HEK293 (cell line): ENCODE measurements at regions of chr5 and their contacts with region 1.

Region 1: DNA sequence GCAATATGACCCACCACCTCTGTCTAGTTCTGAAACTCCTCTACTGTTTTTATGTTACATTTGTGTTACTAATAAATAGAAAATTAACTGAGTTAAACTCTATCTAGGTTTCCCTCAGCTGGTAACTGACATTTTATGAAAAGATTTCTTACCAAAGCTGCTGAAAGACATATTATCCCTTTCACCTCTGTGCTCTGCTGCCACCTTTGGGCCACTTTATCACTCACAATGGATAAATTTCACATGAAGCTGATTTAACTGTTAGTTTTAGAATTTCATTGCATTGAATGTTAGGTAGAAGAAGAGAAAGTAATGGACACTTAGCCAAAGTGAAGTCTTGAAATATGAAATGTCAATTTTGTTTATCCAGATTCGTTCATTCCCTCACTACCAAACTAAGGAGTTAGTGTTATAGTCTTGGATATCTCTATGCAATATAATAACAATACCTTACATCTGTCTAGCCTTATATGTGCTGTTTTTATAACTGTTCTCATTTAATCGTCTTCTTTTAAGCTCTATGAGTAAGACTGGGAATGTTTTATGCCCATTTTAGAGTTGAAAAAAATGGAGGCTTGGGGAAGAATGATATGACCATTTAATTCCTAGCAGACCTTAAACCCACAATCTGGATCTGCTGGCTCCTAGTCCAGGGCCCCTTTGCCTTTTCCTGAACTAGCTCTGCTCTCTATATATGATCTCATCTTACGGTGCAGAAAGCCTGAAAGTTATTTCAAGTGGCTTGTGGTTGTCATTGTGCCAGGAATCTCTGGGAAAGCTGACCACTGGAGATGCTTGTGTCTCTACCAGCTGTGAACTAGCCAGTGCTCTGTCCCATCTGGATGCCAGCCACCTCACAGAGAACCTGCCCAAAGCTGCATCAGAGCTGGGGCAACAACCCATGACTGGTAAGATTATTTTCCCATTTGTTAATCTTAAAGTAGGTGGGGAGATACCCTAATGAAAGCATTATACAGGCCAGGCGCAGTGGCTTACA is 97.1 kb downstream of the GOLPH3 start:
- H3K4me3 ChIP-seq: no peak overlapping the region
- H3K27ac ChIP-seq: no peak overlapping the region
- H3K4me1 ChIP-seq: no peaks in the 10 kb centered on the region
- CTCF ChIP-seq: peak; percentile 61

Region 2: DNA sequence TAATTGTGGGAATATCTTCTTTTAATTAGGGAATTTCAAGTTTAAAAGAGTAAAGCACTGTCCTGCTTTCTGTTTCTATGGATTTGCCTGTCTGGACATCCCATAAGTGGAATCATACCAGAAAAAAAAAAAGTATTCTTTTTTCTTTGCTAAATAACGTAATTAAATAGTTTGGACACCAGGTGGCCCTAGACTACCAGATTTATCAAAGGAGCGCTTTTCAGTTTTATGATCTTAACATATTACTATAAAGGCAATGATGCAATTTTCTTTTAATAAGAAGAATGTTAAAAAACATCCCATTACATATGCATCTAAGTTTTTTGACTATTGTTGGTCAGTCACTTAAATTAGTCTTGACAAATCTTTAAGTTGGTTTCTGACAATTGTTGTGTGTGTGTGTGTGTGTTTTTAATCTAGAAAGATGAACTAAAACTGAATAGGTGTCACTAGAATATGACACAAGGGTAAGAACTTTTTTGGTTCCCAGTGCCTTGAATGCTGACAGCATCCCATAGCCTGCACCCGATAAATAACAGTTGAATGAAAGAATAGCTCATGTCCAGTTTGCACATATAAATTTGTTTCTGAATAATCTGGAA is 495.4 kb before region 1 on chr5:
- CTCF ChIA-PET with region 1: interaction called, 18 read pairs
- POLR2A ChIA-PET with region 1: no interaction called
- H3K4me3 ChIP-seq: no peak overlapping the region
- H3K27ac ChIP-seq: no peak overlapping the region
- H3K4me1 ChIP-seq: no peaks in the 10 kb centered on the region
- CTCF ChIP-seq: no peak

Region 3: DNA sequence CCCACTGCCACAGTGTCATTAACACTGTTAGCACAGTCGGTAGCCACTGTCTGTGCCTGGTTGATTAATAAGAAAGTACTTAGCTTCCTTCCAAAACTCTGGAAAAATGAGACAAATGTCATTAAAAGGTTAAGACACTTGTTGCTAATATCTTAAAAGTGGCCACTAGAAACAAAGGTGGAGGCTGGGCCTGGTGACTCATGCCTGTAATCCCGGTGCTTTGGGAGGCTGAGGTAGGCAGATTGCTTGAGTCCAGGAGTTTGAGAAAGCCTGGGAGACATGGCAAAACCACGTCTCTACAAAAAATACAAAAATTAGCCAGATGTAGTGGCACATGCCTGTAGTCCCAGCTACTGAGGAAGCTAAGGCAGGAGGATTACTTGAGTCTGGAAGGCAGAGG is 244.0 kb before region 1 on chr5:
- CTCF ChIA-PET with region 1: interaction called, 119 read pairs
- POLR2A ChIA-PET with region 1: no interaction called
- H3K4me3 ChIP-seq: no peak overlapping the region
- H3K27ac ChIP-seq: no peak overlapping the region
- H3K4me1 ChIP-seq: no peaks in the 10 kb centered on the region
- CTCF ChIP-seq: no peak

Region 4: DNA sequence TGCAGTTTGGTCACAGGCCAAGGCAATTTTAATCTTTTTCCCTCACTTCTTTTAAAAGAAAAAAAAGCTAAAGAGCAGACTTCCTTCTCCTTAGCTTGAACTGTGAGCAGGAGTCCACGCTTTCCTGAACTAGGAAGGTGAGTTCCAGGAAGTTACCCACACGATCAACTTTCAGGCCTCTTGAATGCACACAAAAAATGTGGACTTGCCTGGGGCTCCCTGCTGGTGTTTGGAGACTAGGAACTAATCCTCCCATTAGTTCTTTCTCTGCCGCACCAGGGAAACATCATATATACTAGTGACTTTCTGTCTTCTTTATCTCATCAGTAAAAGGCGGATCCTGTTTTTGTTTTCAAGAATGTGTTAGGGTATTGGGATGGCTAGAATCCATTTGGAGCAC is 142.8 kb before region 1 on chr5:
- CTCF ChIA-PET with region 1: interaction called, 11 read pairs
- POLR2A ChIA-PET with region 1: no interaction called
- H3K4me3 ChIP-seq: no peak overlapping the region
- H3K27ac ChIP-seq: no peak overlapping the region
- H3K4me1 ChIP-seq: 0 out of 2 replicates have a peak, but pooled peaks cover 3% of the 10 kb centered on the region
- CTCF ChIP-seq: no peak

Region 5: DNA sequence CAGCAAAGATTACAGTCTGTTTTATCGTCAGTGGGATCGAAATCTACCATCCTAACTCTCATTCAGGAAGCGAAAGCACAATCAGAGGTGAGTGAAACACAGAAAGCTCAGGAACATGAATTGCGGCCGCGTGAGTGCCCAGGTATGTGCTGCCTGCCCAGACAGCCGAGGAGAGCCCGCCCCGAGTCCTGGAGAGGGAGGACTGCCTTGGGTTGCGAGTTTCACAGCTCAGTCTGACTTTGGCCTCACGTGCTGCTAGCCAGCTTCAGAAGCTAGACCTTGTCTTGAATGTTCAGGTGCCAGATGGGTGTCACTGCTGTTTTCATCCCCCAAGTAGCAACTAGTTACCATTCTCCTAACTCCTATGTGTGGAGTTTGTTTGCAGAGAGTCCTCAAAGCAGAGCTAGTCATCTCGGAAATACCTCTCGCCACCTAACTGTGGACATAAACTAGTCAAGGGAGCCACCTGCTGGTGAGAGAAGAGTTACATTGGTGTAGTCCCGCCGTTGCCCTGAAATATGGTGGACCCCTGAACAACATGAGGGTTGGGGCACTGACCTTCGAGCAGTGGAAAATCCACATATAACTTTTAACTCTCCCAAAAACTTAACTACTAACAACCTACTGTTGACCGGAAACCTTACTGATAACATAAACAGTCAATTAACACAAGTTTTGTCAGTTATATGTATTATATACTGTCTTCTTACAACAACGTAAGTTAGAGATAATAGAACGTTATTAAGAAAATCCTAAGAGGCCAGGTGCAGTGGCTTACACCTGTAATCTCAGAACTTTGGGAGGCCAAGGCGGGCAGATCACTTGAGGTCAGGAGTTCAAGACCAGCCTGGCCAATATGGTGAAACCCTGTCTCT is 16.2 kb after region 1 on chr5:
- CTCF ChIA-PET with region 1: interaction called, 17 read pairs
- POLR2A ChIA-PET with region 1: no interaction called
- H3K4me3 ChIP-seq: no peak overlapping the region
- H3K27ac ChIP-seq: no peak overlapping the region
- H3K4me1 ChIP-seq: no peaks in the 10 kb centered on the region
- CTCF ChIP-seq: peak; percentile 91

Region 6: GRCh38 chr5:32542216-32543059 is 465.4 kb after region 1 on chr5:
- CTCF ChIA-PET with region 1: no interaction called
- POLR2A ChIA-PET with region 1: no interaction called
- H3K4me3 ChIP-seq: no peak overlapping the region
- H3K27ac ChIP-seq: no peak overlapping the region
- H3K4me1 ChIP-seq: no peaks in the 10 kb centered on the region
- CTCF ChIP-seq: no peak